ENCODE measurements at regions of chr21 and their contacts with region 1.

Region 1: GRCh38 chr21:40841524-40842202 is 5.3 kb downstream of the DSCAM start:
- DNase-seq: no peak
- ATAC-seq: peak; percentile 96
- H3K4me3 ChIP-seq: peak overlapping the region; percentile 24 to 43
- H3K27ac ChIP-seq: no peak overlapping the region
- H3K4me1 ChIP-seq: no peaks in the 10 kb centered on the region
- H3K27me3 ChIP-seq: peaks cover 23% of the 10 kb centered on the region
- CTCF ChIP-seq: peak; percentile 76

Region 2: GRCh38 chr21:40466893-40467501 is 374.7 kb before region 1 on chr21:
- CTCF ChIA-PET with region 1: no interaction called
- POLR2A ChIA-PET with region 1: no interaction called
- in situ Hi-C with region 1: no loop called
- intact Hi-C with region 1: loop called (anchors 5 kb)
- DNase-seq: peak; percentile 32
- ATAC-seq: no peak
- H3K4me3 ChIP-seq: no peak overlapping the region
- H3K27ac ChIP-seq: no peak overlapping the region
- H3K4me1 ChIP-seq: no peaks in the 10 kb centered on the region
- H3K27me3 ChIP-seq: no peaks in the 10 kb centered on the region
- CTCF ChIP-seq: peak; percentile 45; the same call in 1 of the 2 replicates